H1 (cell line): ENCODE measurements at regions of chr17 and their contacts with region 1.

Region 1: GRCh38 chr17:63984651-63985386 is 12.1 kb upstream of the SCN4A start:
- DNase-seq: no peak
- H3K4me3 ChIP-seq: no peak overlapping the region
- H3K27ac ChIP-seq: no peak overlapping the region
- H3K4me1 ChIP-seq: peaks cover 0 to 17% (median 9%) of the 10 kb centered on the region in 4 experiments; a peak in 6 of 7 replicates
- H3K27me3 ChIP-seq: no peaks in the 10 kb centered on the region; a peak in 1 of 7 replicates
- CTCF ChIP-seq: no peak
- EP300 ChIP-seq: no peak
- POLR2A ChIP-seq: no peak
- RAD21 ChIP-seq: no peak

Region 2: GRCh38 chr17:63881876-63882601 is 102.8 kb before region 1 on chr17 and contains the start of gene GH2:
- CTCF ChIA-PET with region 1: interaction called, 12 read pairs
- POLR2A ChIA-PET with region 1: no interaction called
- DNase-seq: peak in 1 of 2 experiments; percentile 88
- H3K4me3 ChIP-seq: peak within 1 kb of the TSS in 2 of 4 experiments; percentile 2 to 33; a peak in 3 of 8 replicates
- H3K27ac ChIP-seq: no peak within 1 kb of the TSS
- H3K4me1 ChIP-seq: peaks cover 3 to 15% (median 8%) of the 10 kb centered on the region in 4 experiments
- H3K27me3 ChIP-seq: no peaks in the 10 kb centered on the region
- CTCF ChIP-seq: peak; percentile 59 to 76 (median 72)
- EP300 ChIP-seq: no peak
- POLR2A ChIP-seq: no peak
- RAD21 ChIP-seq: peak; percentile 10 to 30; a peak in 2 of 4 replicates
- total RNA-seq, gene GH2: 0.60 and 1.2 TPM in 2 replicates

Region 3: GRCh38 chr17:63911657-63912426 is 73.0 kb before region 1 on chr17:
- CTCF ChIA-PET with region 1: interaction called, 67 read pairs
- POLR2A ChIA-PET with region 1: no interaction called
- DNase-seq: peak in 1 of 2 experiments; percentile 87
- H3K4me3 ChIP-seq: no peak overlapping the region
- H3K27ac ChIP-seq: no peak overlapping the region
- H3K4me1 ChIP-seq: peaks cover 0 to 2% (median under 1%) of the 10 kb centered on the region in 4 experiments; a peak in 2 of 7 replicates
- H3K27me3 ChIP-seq: no peaks in the 10 kb centered on the region
- CTCF ChIP-seq: peak; percentile 63 to 83 (median 69)
- EP300 ChIP-seq: no peak
- POLR2A ChIP-seq: no peak
- RAD21 ChIP-seq: peak; percentile 62 to 65

Region 4: GRCh38 chr17:63966646-63967264 is 18.1 kb before region 1 on chr17:
- CTCF ChIA-PET with region 1: interaction called, 15 read pairs
- POLR2A ChIA-PET with region 1: no interaction called
- DNase-seq: no peak
- H3K4me3 ChIP-seq: no peak overlapping the region
- H3K27ac ChIP-seq: no peak overlapping the region
- H3K4me1 ChIP-seq: peaks cover 0 to 10% (median 4%) of the 10 kb centered on the region in 4 experiments; a peak in 6 of 7 replicates
- H3K27me3 ChIP-seq: no peaks in the 10 kb centered on the region
- CTCF ChIP-seq: no peak
- EP300 ChIP-seq: no peak
- POLR2A ChIP-seq: no peak
- RAD21 ChIP-seq: no peak

Region 5: GRCh38 chr17:63974594-63975192 is 10.1 kb before region 1 on chr17:
- CTCF ChIA-PET with region 1: interaction called, 41 read pairs
- POLR2A ChIA-PET with region 1: interaction called, 4 read pairs
- DNase-seq: no peak
- H3K4me3 ChIP-seq: no peak overlapping the region
- H3K27ac ChIP-seq: no peak overlapping the region
- H3K4me1 ChIP-seq: peaks cover 0 to 7% (median under 1%) of the 10 kb centered on the region in 4 experiments; a peak in 4 of 7 replicates
- H3K27me3 ChIP-seq: no peaks in the 10 kb centered on the region; a peak in 1 of 7 replicates
- CTCF ChIP-seq: no peak
- EP300 ChIP-seq: no peak
- POLR2A ChIP-seq: no peak
- RAD21 ChIP-seq: no peak

Region 6: GRCh38 chr17:63998050-63998720 is 13.4 kb after region 1 on chr17 and contains the start of gene PRR29:
- CTCF ChIA-PET with region 1: interaction called, 24 read pairs
- POLR2A ChIA-PET with region 1: no interaction called
- DNase-seq: peak in 1 of 2 experiments; percentile 95
- H3K4me3 ChIP-seq: peak within 1 kb of the TSS; percentile 62 to 87 (median 76)
- H3K27ac ChIP-seq: no peak within 1 kb of the TSS
- H3K4me1 ChIP-seq: peaks cover 3 to 14% (median 6%) of the 10 kb centered on the region in 4 experiments
- H3K27me3 ChIP-seq: peaks cover 0 to 28% (median 16%) of the 10 kb centered on the region in 4 experiments; a peak in 5 of 7 replicates
- CTCF ChIP-seq: no peak
- EP300 ChIP-seq: no peak
- POLR2A ChIP-seq: no peak
- RAD21 ChIP-seq: no peak
- total RNA-seq, gene PRR29: 0.61 and 0.67 TPM in 2 replicates